CD8-positive, alpha-beta T cell (primary cell): ENCODE measurements at regions of chr12 and their contacts with region 1.

Region 1: GRCh38 chr12:56224102-56224701 is at the start of gene NABP2:
- DNase-seq: peak; percentile 74 to 97 (median 91)
- ATAC-seq: peak; percentile 64
- H3K4me3 ChIP-seq: peak within 1 kb of the TSS; percentile 65 to 68
- H3K4me3 Mint-ChIP-seq: peak within 1 kb of the TSS; percentile 95
- H3K27ac ChIP-seq: peak within 1 kb of the TSS; percentile 53 to 85
- H3K27ac Mint-ChIP-seq: peak within 1 kb of the TSS; percentile 99
- H3K4me1 ChIP-seq: peaks cover 29% of the 10 kb centered on the region
- H3K4me1 Mint-ChIP-seq: peaks cover 44% of the 10 kb centered on the region
- H3K27me3 ChIP-seq: no peaks in the 10 kb centered on the region
- H3K27me3 Mint-ChIP-seq: no peaks in the 10 kb centered on the region
- CTCF ChIP-seq: peak; percentile 84
- total RNA-seq, gene NABP2: 6.8 to 7.4 TPM

Region 2: GRCh38 chr12:55817346-55818139 is 406.7 kb before region 1 on chr12 and contains the starts of genes ORMDL2 and SARNP:
- CTCF ChIA-PET with region 1: no interaction called
- POLR2A ChIA-PET with region 1: no interaction called
- intact Hi-C with region 1: loop called in 1 of 2 experiments (anchors 5 kb)
- DNase-seq: peak; percentile 88 to 100 (median 94)
- ATAC-seq: peak; percentile 91
- H3K4me3 ChIP-seq: peak within 1 kb of the TSS; percentile 81 to 89
- H3K4me3 Mint-ChIP-seq: no peak within 1 kb of the TSS
- H3K27ac ChIP-seq: peak within 1 kb of the TSS; percentile 81 to 89
- H3K27ac Mint-ChIP-seq: no peak within 1 kb of the TSS
- H3K4me1 ChIP-seq: peaks cover 38% of the 10 kb centered on the region
- H3K4me1 Mint-ChIP-seq: peaks cover 44% of the 10 kb centered on the region
- H3K27me3 ChIP-seq: no peaks in the 10 kb centered on the region
- H3K27me3 Mint-ChIP-seq: no peaks in the 10 kb centered on the region
- CTCF ChIP-seq: no peak
- total RNA-seq, gene ORMDL2: 13.2 to 15.1 TPM
- total RNA-seq, gene SARNP: 48.0 to 50.3 TPM

Region 3: DNA sequence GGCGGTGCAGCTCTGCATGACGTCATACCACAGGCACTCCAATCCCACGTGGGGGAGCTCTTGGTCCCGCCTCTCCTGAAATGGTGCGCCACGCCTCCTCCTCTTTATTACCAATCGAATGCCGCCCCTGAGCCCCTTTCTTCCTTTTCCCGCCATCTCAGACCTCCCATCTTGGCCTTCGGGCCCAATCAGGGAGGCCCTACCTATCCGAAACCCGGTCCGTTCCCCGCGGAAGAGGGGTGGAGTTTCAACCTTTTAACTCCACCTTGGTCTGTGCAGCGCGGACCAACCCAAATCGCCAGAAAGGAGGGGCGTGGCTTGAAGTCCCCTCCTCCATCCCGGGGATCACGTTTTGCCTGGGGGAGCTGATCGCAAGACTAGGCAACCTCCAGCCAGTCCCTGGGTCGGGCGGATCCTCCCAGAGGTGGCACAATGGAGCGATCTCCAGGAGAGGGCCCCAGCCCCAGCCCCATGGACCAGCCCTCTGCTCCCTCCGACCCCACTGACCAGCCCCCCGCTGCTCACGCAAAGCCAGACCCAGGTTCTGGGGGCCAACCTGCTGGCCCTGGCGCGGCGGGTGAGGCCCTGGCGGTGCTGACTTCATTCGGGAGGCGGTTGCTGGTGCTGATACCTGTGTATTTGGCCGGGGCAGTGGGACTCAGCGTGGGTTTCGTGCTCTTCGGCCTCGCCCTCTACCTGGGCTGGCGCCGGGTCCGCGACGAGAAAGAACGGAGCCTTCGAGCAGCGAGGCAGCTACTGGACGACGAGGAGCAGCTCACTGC is 96.1 kb before region 1 on chr12 and contains the start of gene ESYT1:
- CTCF ChIA-PET with region 1: interaction called, 6 read pairs
- POLR2A ChIA-PET with region 1: interaction called, 23 read pairs
- intact Hi-C with region 1: loop called in 1 of 2 experiments (anchors 1 kb)
- DNase-seq: peak; percentile 94 to 100 (median 96)
- ATAC-seq: peak; percentile 87
- H3K4me3 ChIP-seq: peak within 1 kb of the TSS; percentile 71 to 97
- H3K4me3 Mint-ChIP-seq: peak within 1 kb of the TSS; percentile 97
- H3K27ac ChIP-seq: peak within 1 kb of the TSS; percentile 79 to 86
- H3K27ac Mint-ChIP-seq: peak within 1 kb of the TSS; percentile 94
- H3K4me1 ChIP-seq: peaks cover 60% of the 10 kb centered on the region
- H3K4me1 Mint-ChIP-seq: peaks cover 64% of the 10 kb centered on the region
- H3K27me3 ChIP-seq: no peaks in the 10 kb centered on the region
- H3K27me3 Mint-ChIP-seq: no peaks in the 10 kb centered on the region
- CTCF ChIP-seq: no peak
- total RNA-seq, gene ESYT1: 82.4 to 83.0 TPM

Region 4: DNA sequence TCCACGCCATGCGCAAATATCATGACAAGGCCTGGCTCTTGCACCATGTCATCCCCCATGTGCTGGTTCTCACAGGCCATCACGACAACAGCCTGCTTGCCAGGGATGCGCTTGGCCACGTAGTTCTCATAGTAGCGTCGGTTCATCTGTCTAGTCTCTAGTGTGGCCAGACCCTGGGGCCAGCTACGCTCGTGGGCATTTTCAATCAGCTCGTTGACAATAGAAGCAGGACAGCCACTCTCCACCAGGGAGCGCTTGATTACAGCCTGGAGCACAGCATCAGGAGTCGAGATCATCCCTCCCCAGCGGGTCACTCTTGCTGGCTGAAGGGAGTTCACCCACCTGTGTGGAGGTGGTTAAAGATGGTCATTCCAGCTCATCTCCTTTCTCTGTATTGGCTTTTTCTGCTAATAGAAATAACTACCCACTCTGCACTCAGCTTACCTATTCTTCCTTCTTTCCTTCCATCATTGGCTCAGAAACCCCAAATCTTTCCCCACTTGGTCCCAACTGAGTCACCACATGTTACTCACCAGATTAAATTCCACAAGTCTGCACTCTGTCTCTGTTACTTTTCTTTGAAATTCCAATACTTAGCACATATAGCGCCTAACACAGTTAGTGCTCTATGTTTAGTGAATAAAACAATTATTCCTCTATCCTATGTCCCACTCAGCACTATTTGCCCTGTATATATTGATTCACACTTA is 17.6 kb before region 1 on chr12:
- CTCF ChIA-PET with region 1: interaction called, 17 read pairs
- POLR2A ChIA-PET with region 1: interaction called, 11 read pairs
- intact Hi-C with region 1: loop called in 1 of 2 experiments (anchors 1 kb)
- DNase-seq: peak in 6 of 9 experiments; percentile 31 to 59 (median 48)
- ATAC-seq: peak; percentile 63
- H3K4me3 ChIP-seq: no peak overlapping the region
- H3K4me3 Mint-ChIP-seq: no peak overlapping the region
- H3K27ac ChIP-seq: no peak overlapping the region
- H3K27ac Mint-ChIP-seq: no peak overlapping the region
- H3K4me1 ChIP-seq: no peaks in the 10 kb centered on the region
- H3K4me1 Mint-ChIP-seq: no peaks in the 10 kb centered on the region
- H3K27me3 ChIP-seq: no peaks in the 10 kb centered on the region
- H3K27me3 Mint-ChIP-seq: no peaks in the 10 kb centered on the region
- CTCF ChIP-seq: no peak

Region 5: GRCh38 chr12:56266693-56267442 is 42.7 kb after region 1 on chr12 and contains the start of gene COQ10A:
- CTCF ChIA-PET with region 1: interaction called, 3 read pairs
- POLR2A ChIA-PET with region 1: interaction called, 14 read pairs
- intact Hi-C with region 1: loop called in 1 of 2 experiments (anchors 2 kb)
- DNase-seq: peak; percentile 77 to 95 (median 92)
- ATAC-seq: peak; percentile 87
- H3K4me3 ChIP-seq: peak within 1 kb of the TSS; percentile 87 to 89
- H3K4me3 Mint-ChIP-seq: peak within 1 kb of the TSS; percentile 92
- H3K27ac ChIP-seq: peak within 1 kb of the TSS; percentile 95 to 98
- H3K27ac Mint-ChIP-seq: peak within 1 kb of the TSS; percentile 92
- H3K4me1 ChIP-seq: peaks cover 12% of the 10 kb centered on the region
- H3K4me1 Mint-ChIP-seq: peaks cover 20% of the 10 kb centered on the region
- H3K27me3 ChIP-seq: no peaks in the 10 kb centered on the region
- H3K27me3 Mint-ChIP-seq: no peaks in the 10 kb centered on the region
- CTCF ChIP-seq: peak; percentile 66
- total RNA-seq, gene COQ10A: 29.5 to 38.8 TPM

Region 6: GRCh38 chr12:56315622-56316473 is 91.6 kb after region 1 on chr12 and contains the start of gene CNPY2:
- CTCF ChIA-PET with region 1: no interaction called
- POLR2A ChIA-PET with region 1: interaction called, 7 read pairs
- intact Hi-C with region 1: loop called in 1 of 2 experiments (anchors 1 kb)
- DNase-seq: peak; percentile 89 to 97 (median 95)
- ATAC-seq: peak; percentile 92
- H3K4me3 ChIP-seq: peak within 1 kb of the TSS; percentile 86 to 99
- H3K4me3 Mint-ChIP-seq: peak within 1 kb of the TSS; percentile 99
- H3K27ac ChIP-seq: peak within 1 kb of the TSS; percentile 70 to 98
- H3K27ac Mint-ChIP-seq: peak within 1 kb of the TSS; percentile 98
- H3K4me1 ChIP-seq: peaks cover 10% of the 10 kb centered on the region
- H3K4me1 Mint-ChIP-seq: peaks cover 16% of the 10 kb centered on the region
- H3K27me3 ChIP-seq: no peaks in the 10 kb centered on the region
- H3K27me3 Mint-ChIP-seq: no peaks in the 10 kb centered on the region
- CTCF ChIP-seq: no peak
- total RNA-seq, gene CNPY2: 23.5 to 33.9 TPM